Activated CD8-positive, alpha-beta T cell treated with anti-CD3 and anti-CD28 coated beads, Interleukin-2, amount 10 ng/mL, durations not matched to agents 7 days and 5 days (primary cell): ENCODE measurements at regions of chr22 and their contacts with region 1.

Region 1: GRCh38 chr22:41780746-41781505 is 19.6 kb upstream of the CCDC134 start:
- DNase-seq: peak; percentile 97
- ATAC-seq: peak; percentile 97
- H3K4me3 Mint-ChIP-seq: peak overlapping the region; percentile 87
- H3K27ac Mint-ChIP-seq: peak overlapping the region; percentile 99
- H3K4me1 Mint-ChIP-seq: peaks cover 40% of the 10 kb centered on the region
- H3K27me3 Mint-ChIP-seq: no peaks in the 10 kb centered on the region

Region 2: GRCh38 chr22:41688365-41689211 is 92.3 kb before region 1 on chr22 and contains the start of gene SNU13:
- CTCF ChIA-PET with region 1: no interaction called
- POLR2A ChIA-PET with region 1: interaction called, 19 read pairs
- DNase-seq: peak; percentile 96
- ATAC-seq: peak; percentile 94
- H3K4me3 Mint-ChIP-seq: peak within 1 kb of the TSS; percentile 88
- H3K27ac Mint-ChIP-seq: peak within 1 kb of the TSS; percentile 99
- H3K4me1 Mint-ChIP-seq: peaks cover 34% of the 10 kb centered on the region
- H3K27me3 Mint-ChIP-seq: no peaks in the 10 kb centered on the region
- total RNA-seq, gene SNU13: 185 to 200 TPM

Region 3: GRCh38 chr22:41746567-41747400 is 34.1 kb before region 1 on chr22:
- CTCF ChIA-PET with region 1: interaction called, 28 read pairs
- POLR2A ChIA-PET with region 1: interaction called, 6 read pairs
- DNase-seq: peak; percentile 63
- ATAC-seq: peak; percentile 90
- H3K4me3 Mint-ChIP-seq: no peak overlapping the region
- H3K27ac Mint-ChIP-seq: no peak overlapping the region
- H3K4me1 Mint-ChIP-seq: no peaks in the 10 kb centered on the region
- H3K27me3 Mint-ChIP-seq: peaks cover 30% of the 10 kb centered on the region

Region 4: GRCh38 chr22:41768430-41768829 is 12.5 kb before region 1 on chr22:
- CTCF ChIA-PET with region 1: interaction called, 10 read pairs
- POLR2A ChIA-PET with region 1: interaction called, 10 read pairs
- DNase-seq: no peak
- ATAC-seq: no peak
- H3K4me3 Mint-ChIP-seq: no peak overlapping the region
- H3K27ac Mint-ChIP-seq: no peak overlapping the region
- H3K4me1 Mint-ChIP-seq: no peaks in the 10 kb centered on the region
- H3K27me3 Mint-ChIP-seq: peaks cover 10% of the 10 kb centered on the region

Region 5: DNA sequence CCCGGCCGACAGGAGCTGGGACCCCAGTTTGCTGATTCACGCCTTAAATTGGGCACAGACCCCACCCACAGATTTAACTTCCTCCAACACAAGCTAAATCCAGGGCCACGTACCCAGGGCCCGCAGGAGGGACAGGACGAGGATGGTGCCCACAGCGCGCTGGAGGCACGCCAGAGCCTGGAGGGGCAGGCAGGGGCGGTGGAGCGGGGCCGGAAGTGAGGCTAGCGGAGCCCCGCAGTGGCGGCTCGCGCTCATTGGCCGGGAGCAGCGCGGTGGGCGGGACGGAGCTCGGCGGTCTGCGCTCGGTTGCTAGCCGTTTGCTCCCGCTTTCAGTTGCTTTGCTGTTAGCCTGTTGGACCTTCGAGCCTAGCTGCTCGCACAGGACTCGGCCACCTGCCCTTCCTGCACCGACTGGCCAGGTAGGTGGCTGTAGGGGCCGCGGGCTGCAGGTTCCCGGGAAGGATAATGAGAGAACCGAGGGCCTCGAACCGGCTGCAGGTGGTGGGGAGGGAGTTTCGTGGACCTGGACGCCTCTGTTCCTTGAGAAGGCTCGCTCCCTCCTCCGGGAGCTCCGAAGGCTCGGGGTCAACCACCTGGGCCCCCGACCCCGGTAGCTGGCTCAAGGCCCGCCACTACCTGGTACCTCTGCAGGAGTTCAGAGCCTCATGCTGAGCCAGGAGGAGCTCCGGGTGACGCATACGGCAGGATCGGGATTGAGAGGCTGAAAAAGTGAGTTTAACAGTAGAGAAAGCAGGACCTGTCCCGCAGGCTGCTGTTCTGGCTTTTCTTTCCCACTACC is 19.6 kb after region 1 on chr22 and contains the start of gene CCDC134:
- CTCF ChIA-PET with region 1: interaction called, 50 read pairs
- POLR2A ChIA-PET with region 1: interaction called, 188 read pairs
- DNase-seq: peak; percentile 94
- ATAC-seq: peak; percentile 98
- H3K4me3 Mint-ChIP-seq: peak within 1 kb of the TSS; percentile 98
- H3K27ac Mint-ChIP-seq: peak within 1 kb of the TSS; percentile 99
- H3K4me1 Mint-ChIP-seq: peaks cover 43% of the 10 kb centered on the region
- H3K27me3 Mint-ChIP-seq: no peaks in the 10 kb centered on the region
- total RNA-seq, gene CCDC134: 20.3 to 20.9 TPM

Region 6: DNA sequence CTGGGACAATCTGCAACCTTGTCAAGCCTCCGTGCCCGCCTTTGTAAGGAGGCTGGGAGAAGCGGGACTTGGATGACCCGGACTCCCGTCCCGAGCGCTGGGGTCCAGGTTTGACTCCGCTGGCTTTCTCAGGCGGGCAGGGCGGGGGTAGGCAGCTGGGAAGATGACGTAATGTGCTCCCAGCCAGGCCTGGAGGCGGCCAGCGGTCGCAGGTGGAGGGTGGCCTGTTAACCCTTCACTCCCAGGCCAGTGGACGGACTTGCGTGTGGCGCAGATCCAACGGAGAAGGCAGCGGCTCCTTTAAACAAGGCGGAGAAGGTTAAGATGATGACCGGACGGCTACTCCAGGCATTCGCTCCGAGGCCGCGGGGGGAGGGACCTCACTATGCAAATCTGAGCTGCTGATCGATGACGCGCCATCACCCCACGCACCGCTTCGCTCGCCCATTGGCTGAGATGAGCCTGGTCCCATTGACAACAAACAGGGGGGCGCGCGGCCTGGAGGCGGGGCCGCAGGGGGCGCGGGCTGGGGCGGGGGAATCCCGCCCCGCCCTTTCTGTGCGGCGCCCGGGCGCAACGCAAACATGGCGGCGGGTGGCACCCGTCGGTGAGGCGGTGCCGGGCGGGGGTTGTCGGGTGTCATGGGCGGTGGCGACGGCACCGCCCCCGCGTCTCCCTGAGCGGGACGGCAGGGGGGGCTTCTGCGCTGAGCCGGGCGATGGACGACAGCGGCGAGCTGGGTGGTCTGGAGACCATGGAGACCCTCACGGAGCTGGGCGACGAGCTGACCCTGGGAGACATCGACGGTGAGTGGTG is 51.8 kb after region 1 on chr22 and contains the start of gene SREBF2:
- CTCF ChIA-PET with region 1: interaction called, 4 read pairs
- POLR2A ChIA-PET with region 1: interaction called, 30 read pairs
- DNase-seq: peak; percentile 100
- ATAC-seq: peak; percentile 95
- H3K4me3 Mint-ChIP-seq: peak within 1 kb of the TSS; percentile 95
- H3K27ac Mint-ChIP-seq: peak within 1 kb of the TSS; percentile 100
- H3K4me1 Mint-ChIP-seq: peaks cover 41% of the 10 kb centered on the region
- H3K27me3 Mint-ChIP-seq: no peaks in the 10 kb centered on the region
- total RNA-seq, gene SREBF2: 93.0 to 93.7 TPM

Region 7: GRCh38 chr22:41857155-41857859 is 76.4 kb after region 1 on chr22:
- CTCF ChIA-PET with region 1: interaction called, 17 read pairs
- POLR2A ChIA-PET with region 1: interaction called, 6 read pairs
- DNase-seq: peak; percentile 79
- ATAC-seq: peak; percentile 71
- H3K4me3 Mint-ChIP-seq: peak overlapping the region; percentile 12
- H3K27ac Mint-ChIP-seq: peak overlapping the region; percentile 31
- H3K4me1 Mint-ChIP-seq: peaks cover 61% of the 10 kb centered on the region
- H3K27me3 Mint-ChIP-seq: no peaks in the 10 kb centered on the region